HepG2 (cell line): ENCODE measurements at regions of chr7 and their contacts with region 1.

Region 1: DNA sequence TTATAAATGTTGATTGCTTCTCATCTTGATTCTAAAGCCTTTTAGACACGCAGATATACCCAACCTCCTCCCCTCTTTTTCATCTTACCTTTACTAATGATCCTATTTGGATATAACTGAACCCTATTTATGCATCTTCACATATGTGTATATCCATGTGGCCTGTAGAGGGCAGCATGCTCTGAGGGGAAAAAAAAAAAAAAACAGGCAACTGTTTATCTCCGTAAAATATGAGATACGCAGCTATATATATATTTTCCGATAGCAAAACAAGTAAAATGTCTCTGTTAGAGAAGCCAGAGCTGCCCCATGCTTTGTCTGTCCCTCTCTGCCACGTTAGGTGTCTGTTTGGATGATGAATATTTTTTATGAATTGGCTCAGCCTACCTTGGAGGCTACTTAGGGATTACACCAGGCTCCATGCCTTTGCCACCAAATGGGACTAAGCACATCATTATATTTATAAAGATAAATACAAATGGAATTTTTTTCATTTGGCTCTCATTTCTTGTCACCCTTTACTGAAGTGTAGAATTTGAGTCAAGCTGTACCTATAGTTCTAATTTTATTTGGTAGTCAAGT is 174.8 kb upstream of the FZD1 start:
- DNase-seq: peak; percentile 16
- ATAC-seq: peak; percentile 69
- H3K4me3 ChIP-seq: no peak overlapping the region
- H3K27ac ChIP-seq: no peak overlapping the region
- H3K4me1 ChIP-seq: no peaks in the 10 kb centered on the region
- H3K27me3 ChIP-seq: no peaks in the 10 kb centered on the region
- CTCF ChIP-seq: peak; percentile 59
- EP300 ChIP-seq: no peak
- POLR2A ChIP-seq: no peak
- RAD21 ChIP-seq: no peak

Region 2: GRCh38 chr7:91030680-91031380 is 58.6 kb before region 1 on chr7:
- CTCF ChIA-PET with region 1: no interaction called
- POLR2A ChIA-PET with region 1: no interaction called
- in situ Hi-C with region 1: no loop called
- intact Hi-C with region 1: no loop called
- DNase-seq: no peak
- ATAC-seq: no peak
- H3K4me3 ChIP-seq: no peak overlapping the region
- H3K27ac ChIP-seq: no peak overlapping the region
- H3K4me1 ChIP-seq: no peaks in the 10 kb centered on the region
- H3K27me3 ChIP-seq: no peaks in the 10 kb centered on the region
- CTCF ChIP-seq: no peak
- EP300 ChIP-seq: no peak
- POLR2A ChIP-seq: no peak
- RAD21 ChIP-seq: no peak

Region 3: GRCh38 chr7:91288208-91288824 is 198.8 kb after region 1 on chr7:
- CTCF ChIA-PET with region 1: no interaction called
- POLR2A ChIA-PET with region 1: no interaction called
- in situ Hi-C with region 1: no loop called
- intact Hi-C with region 1: loop called (anchors 10 kb)
- DNase-seq: peak; percentile 16
- ATAC-seq: peak; percentile 72
- H3K4me3 ChIP-seq: no peak overlapping the region
- H3K27ac ChIP-seq: no peak overlapping the region
- H3K4me1 ChIP-seq: no peaks in the 10 kb centered on the region
- H3K27me3 ChIP-seq: no peaks in the 10 kb centered on the region
- CTCF ChIP-seq: peak; percentile 62
- EP300 ChIP-seq: no peak
- POLR2A ChIP-seq: no peak
- RAD21 ChIP-seq: peak; percentile 13; the same call in 1 of the 2 replicates

Region 4: GRCh38 chr7:91424371-91424770 is 334.9 kb after region 1 on chr7:
- CTCF ChIA-PET with region 1: no interaction called
- POLR2A ChIA-PET with region 1: no interaction called
- in situ Hi-C with region 1: no loop called
- intact Hi-C with region 1: loop called (anchors 10 kb)
- DNase-seq: peak; percentile 2
- ATAC-seq: peak; percentile 44; the same call in 1 of the 3 replicates
- H3K4me3 ChIP-seq: no peak overlapping the region
- H3K27ac ChIP-seq: no peak overlapping the region
- H3K4me1 ChIP-seq: no peaks in the 10 kb centered on the region
- H3K27me3 ChIP-seq: no peaks in the 10 kb centered on the region; a peak in 1 of 5 replicates
- CTCF ChIP-seq: no peak; the same call in 1 of the 2 replicates
- EP300 ChIP-seq: no peak
- POLR2A ChIP-seq: no peak
- RAD21 ChIP-seq: no peak

Region 5: GRCh38 chr7:91784463-91784862 is 695.0 kb after region 1 on chr7:
- CTCF ChIA-PET with region 1: interaction called, 11 read pairs
- POLR2A ChIA-PET with region 1: no interaction called
- in situ Hi-C with region 1: loop called (anchors 25 kb)
- intact Hi-C with region 1: loop called (anchors 1 kb)
- DNase-seq: no peak
- ATAC-seq: no peak
- H3K4me3 ChIP-seq: no peak overlapping the region
- H3K27ac ChIP-seq: no peak overlapping the region
- H3K4me1 ChIP-seq: no peaks in the 10 kb centered on the region
- H3K27me3 ChIP-seq: no peaks in the 10 kb centered on the region; a peak in 1 of 5 replicates
- CTCF ChIP-seq: peak; percentile 46
- EP300 ChIP-seq: no peak
- POLR2A ChIP-seq: no peak
- RAD21 ChIP-seq: no peak